HEK293 (cell line): ENCODE measurements at regions of chr22 and their contacts with region 1.

Region 1: GRCh38 chr22:22884010-22884887 is 3.4 kb upstream of the IGLL5 start:
- H3K4me3 ChIP-seq: no peak overlapping the region
- H3K27ac ChIP-seq: no peak overlapping the region
- H3K4me1 ChIP-seq: no peaks in the 10 kb centered on the region
- CTCF ChIP-seq: peak; percentile 48

Region 2: GRCh38 chr22:22463855-22464540 is 420.3 kb before region 1 on chr22:
- CTCF ChIA-PET with region 1: interaction called, 19 read pairs
- POLR2A ChIA-PET with region 1: no interaction called
- H3K4me3 ChIP-seq: no peak overlapping the region
- H3K27ac ChIP-seq: no peak overlapping the region
- H3K4me1 ChIP-seq: no peaks in the 10 kb centered on the region
- CTCF ChIP-seq: peak; percentile 77

Region 3: GRCh38 chr22:22745225-22746060 is 138.8 kb before region 1 on chr22:
- CTCF ChIA-PET with region 1: interaction called, 60 read pairs
- POLR2A ChIA-PET with region 1: no interaction called
- H3K4me3 ChIP-seq: no peak overlapping the region
- H3K27ac ChIP-seq: no peak overlapping the region
- H3K4me1 ChIP-seq: no peaks in the 10 kb centered on the region
- CTCF ChIP-seq: peak; percentile 57; the same call in 1 of the 2 replicates

Region 4: GRCh38 chr22:22776121-22776520 is 108.1 kb before region 1 on chr22:
- CTCF ChIA-PET with region 1: interaction called, 77 read pairs
- POLR2A ChIA-PET with region 1: no interaction called
- H3K4me3 ChIP-seq: no peak overlapping the region
- H3K27ac ChIP-seq: no peak overlapping the region
- H3K4me1 ChIP-seq: no peaks in the 10 kb centered on the region
- CTCF ChIP-seq: no peak

Region 5: GRCh38 chr22:22848364-22848866 is 35.8 kb before region 1 on chr22:
- CTCF ChIA-PET with region 1: interaction called, 107 read pairs
- POLR2A ChIA-PET with region 1: no interaction called
- H3K4me3 ChIP-seq: no peak overlapping the region
- H3K27ac ChIP-seq: no peak overlapping the region
- H3K4me1 ChIP-seq: no peaks in the 10 kb centered on the region
- CTCF ChIP-seq: peak; percentile 81

Region 6: GRCh38 chr22:22871516-22872278 is 12.6 kb before region 1 on chr22:
- CTCF ChIA-PET with region 1: interaction called, 29 read pairs
- POLR2A ChIA-PET with region 1: no interaction called
- H3K4me3 ChIP-seq: no peak overlapping the region
- H3K27ac ChIP-seq: no peak overlapping the region
- H3K4me1 ChIP-seq: no peaks in the 10 kb centered on the region
- CTCF ChIP-seq: no peak